CD4-positive, alpha-beta T cell (primary cell): ENCODE measurements at regions of chr9 and their contacts with region 1.

Region 1: DNA sequence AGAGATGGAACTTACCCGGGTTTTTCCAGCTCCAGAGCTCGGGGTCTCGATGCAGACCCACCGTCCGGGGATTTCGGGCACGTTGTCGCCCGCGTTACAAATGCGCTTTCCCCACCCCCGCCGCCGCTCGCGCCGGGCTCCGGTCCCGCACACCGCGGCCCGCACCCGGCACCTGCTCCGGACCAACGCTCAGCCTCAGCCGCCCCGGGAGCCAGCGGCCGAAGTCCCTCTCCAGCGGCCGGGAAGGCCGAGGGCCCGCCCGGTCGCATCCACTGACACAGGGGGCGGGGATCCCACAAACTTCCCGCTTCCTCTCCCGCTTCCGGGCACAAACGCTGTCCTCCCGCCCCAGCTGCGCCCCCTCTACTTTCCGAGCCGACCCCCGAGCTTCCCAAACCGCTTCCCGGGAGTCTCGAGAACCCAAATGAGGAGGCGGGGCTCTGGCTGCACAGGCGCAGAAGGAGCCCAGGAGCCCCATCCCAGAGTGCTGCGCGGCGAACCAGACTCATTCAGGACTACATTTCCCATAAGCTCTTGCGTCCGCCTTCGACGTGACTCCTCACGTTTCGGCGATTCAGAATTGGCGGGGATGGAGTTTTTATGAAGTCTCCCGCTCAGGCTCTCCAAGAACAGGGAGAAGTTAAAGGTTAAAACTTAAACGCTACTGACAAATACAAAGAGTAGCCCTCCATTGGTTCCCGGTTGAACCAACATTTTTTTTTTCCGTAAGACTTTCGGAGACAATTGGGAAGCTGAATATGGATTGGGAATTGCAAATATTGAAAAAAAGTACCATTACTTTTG is at the start of gene ZNF782:
- DNase-seq: peak; percentile 67 to 93 (median 78)
- ATAC-seq: peak; percentile 88
- H3K4me3 ChIP-seq: peak within 1 kb of the TSS; percentile 87
- H3K4me3 Mint-ChIP-seq: peak within 1 kb of the TSS; percentile 100
- H3K27ac ChIP-seq: peak within 1 kb of the TSS; percentile 26 to 58
- H3K27ac Mint-ChIP-seq: peak within 1 kb of the TSS; percentile 88
- H3K4me1 ChIP-seq: peaks cover 24% of the 10 kb centered on the region
- H3K4me1 Mint-ChIP-seq: peaks cover 58% of the 10 kb centered on the region
- H3K27me3 ChIP-seq: no peaks in the 10 kb centered on the region
- H3K27me3 Mint-ChIP-seq: no peaks in the 10 kb centered on the region
- CTCF ChIP-seq: no peak
- total RNA-seq, gene ZNF782: 4.3 to 4.9 TPM

Region 2: DNA sequence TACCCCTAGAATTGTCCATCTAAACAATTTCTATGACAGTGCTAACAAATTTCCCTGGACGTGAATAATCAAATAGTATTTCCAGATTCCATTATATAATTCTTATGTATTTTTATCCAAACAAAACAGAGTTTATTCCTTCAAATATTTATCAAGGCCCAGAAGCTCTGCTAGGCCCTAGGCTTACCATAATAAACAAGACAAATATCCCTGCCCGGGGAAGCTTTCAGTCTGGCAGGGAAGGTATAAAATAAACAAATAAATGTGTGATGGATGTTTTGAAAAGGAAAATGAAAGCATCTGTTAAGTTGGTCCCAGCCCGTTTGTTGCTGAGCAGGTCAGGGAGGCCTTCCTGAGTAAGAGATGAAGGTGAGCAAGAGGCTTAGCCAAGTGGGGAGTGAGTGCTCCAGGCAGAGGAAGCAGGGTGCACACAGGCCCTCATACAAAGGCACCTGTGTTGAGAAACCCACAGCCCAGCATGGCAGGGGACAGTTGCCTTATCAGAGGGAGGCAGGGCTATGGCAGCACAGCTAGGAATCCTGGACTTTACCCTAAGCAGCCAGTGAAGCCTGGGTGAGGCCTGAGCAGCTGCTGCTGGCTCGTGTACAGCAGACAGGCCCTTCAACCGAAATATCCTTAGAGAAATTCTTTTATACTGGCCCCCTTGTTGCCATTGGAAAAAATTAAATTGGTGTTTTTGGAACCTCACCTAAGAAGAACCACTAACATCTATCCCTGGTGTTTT is 463.1 kb before region 1 on chr9:
- CTCF ChIA-PET with region 1: no interaction called
- POLR2A ChIA-PET with region 1: no interaction called
- intact Hi-C with region 1: no loop called
- DNase-seq: peak in 1 of 14 experiments; percentile 53
- ATAC-seq: no peak
- H3K4me3 ChIP-seq: no peak overlapping the region
- H3K4me3 Mint-ChIP-seq: no peak overlapping the region
- H3K27ac ChIP-seq: peak overlapping the region in 1 of 2 donors; percentile 37
- H3K27ac Mint-ChIP-seq: peak overlapping the region; percentile 47
- H3K4me1 ChIP-seq: peaks cover 4% of the 10 kb centered on the region
- H3K4me1 Mint-ChIP-seq: no peaks in the 10 kb centered on the region
- H3K27me3 ChIP-seq: no peaks in the 10 kb centered on the region
- H3K27me3 Mint-ChIP-seq: no peaks in the 10 kb centered on the region
- CTCF ChIP-seq: no peak

Region 3: GRCh38 chr9:96875461-96876364 is 21.4 kb after region 1 on chr9:
- CTCF ChIA-PET with region 1: interaction called, 16 read pairs
- POLR2A ChIA-PET with region 1: interaction called, 3 read pairs
- intact Hi-C with region 1: no loop called
- DNase-seq: peak in 7 of 14 experiments; percentile 11 to 64 (median 45)
- ATAC-seq: peak; percentile 8
- H3K4me3 ChIP-seq: peak overlapping the region; percentile 48
- H3K4me3 Mint-ChIP-seq: peak overlapping the region; percentile 81
- H3K27ac ChIP-seq: peak overlapping the region in 1 of 2 donors; percentile 13
- H3K27ac Mint-ChIP-seq: peak overlapping the region; percentile 64
- H3K4me1 ChIP-seq: peaks cover 23% of the 10 kb centered on the region
- H3K4me1 Mint-ChIP-seq: peaks cover 24% of the 10 kb centered on the region
- H3K27me3 ChIP-seq: peaks cover 40 to 54% of the 10 kb centered on the region in 2 experiments
- H3K27me3 Mint-ChIP-seq: peaks cover 74% of the 10 kb centered on the region
- CTCF ChIP-seq: no peak

Region 4: GRCh38 chr9:97398999-97399758 is 544.9 kb after region 1 on chr9:
- CTCF ChIA-PET with region 1: interaction called, 9 read pairs
- POLR2A ChIA-PET with region 1: interaction called, 3 read pairs
- intact Hi-C with region 1: loop called (anchors 1 kb)
- DNase-seq: peak; percentile 37 to 84 (median 60)
- ATAC-seq: peak; percentile 86
- H3K4me3 ChIP-seq: no peak overlapping the region
- H3K4me3 Mint-ChIP-seq: no peak overlapping the region
- H3K27ac ChIP-seq: no peak overlapping the region
- H3K27ac Mint-ChIP-seq: no peak overlapping the region
- H3K4me1 ChIP-seq: peaks cover 7% of the 10 kb centered on the region
- H3K4me1 Mint-ChIP-seq: no peaks in the 10 kb centered on the region
- H3K27me3 ChIP-seq: peaks cover 0 to 5% of the 10 kb centered on the region in 2 experiments
- H3K27me3 Mint-ChIP-seq: no peaks in the 10 kb centered on the region
- CTCF ChIP-seq: peak; percentile 90

Region 5: GRCh38 chr9:97598461-97599288 is 744.4 kb after region 1 on chr9:
- CTCF ChIA-PET with region 1: interaction called, 11 read pairs
- POLR2A ChIA-PET with region 1: interaction called, 4 read pairs
- intact Hi-C with region 1: loop called (anchors 2 to 5 kb)
- DNase-seq: peak; percentile 46 to 85 (median 60)
- ATAC-seq: peak; percentile 96
- H3K4me3 ChIP-seq: no peak overlapping the region
- H3K4me3 Mint-ChIP-seq: peak overlapping the region; percentile 40
- H3K27ac ChIP-seq: no peak overlapping the region
- H3K27ac Mint-ChIP-seq: no peak overlapping the region
- H3K4me1 ChIP-seq: peaks cover 4% of the 10 kb centered on the region
- H3K4me1 Mint-ChIP-seq: peaks cover 7% of the 10 kb centered on the region
- H3K27me3 ChIP-seq: no peaks in the 10 kb centered on the region
- H3K27me3 Mint-ChIP-seq: no peaks in the 10 kb centered on the region
- CTCF ChIP-seq: peak; percentile 87